Ovary (tissue), 10 donors: ENCODE measurements at regions of chr11 and their contacts with region 1.

Region 1: DNA sequence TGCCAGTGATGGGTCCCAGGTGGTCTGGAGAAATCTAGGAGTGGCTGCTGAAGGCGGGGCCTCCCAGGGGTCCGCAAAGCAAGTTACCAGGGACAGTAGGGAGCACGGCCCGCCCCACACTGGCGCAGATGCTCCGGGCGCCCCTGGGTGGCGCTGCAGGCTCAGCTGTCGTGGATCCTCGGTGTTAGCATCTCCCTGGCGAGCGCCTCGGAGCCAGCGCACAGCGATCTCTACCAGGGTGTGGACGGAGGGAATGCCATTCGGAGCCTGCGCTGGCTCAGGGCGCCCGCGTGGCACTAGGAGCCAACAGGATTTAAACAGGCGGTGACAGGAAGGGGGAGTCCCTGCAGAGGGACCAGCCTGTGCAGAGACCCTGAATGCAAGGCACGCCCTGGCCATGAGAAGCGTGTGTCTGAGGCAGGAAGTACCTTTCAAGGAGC is 20.2 kb downstream of the FADS3 start:
- DNase-seq: peak; percentile 69 to 86 (median 79)
- H3K4me3 ChIP-seq: no peak overlapping the region
- H3K27ac ChIP-seq: peak overlapping the region in 1 of 2 donors; percentile 19
- H3K4me1 ChIP-seq: peaks cover 4% of the 10 kb centered on the region
- H3K27me3 ChIP-seq: no peaks in the 10 kb centered on the region
- CTCF ChIP-seq: peak; percentile 59 to 90 (median 89)
- EP300 ChIP-seq: no peak
- POLR2A ChIP-seq: no peak

Region 2: GRCh38 chr11:61803889-61804647 is 67.1 kb before region 1 on chr11:
- intact Hi-C with region 1: loop called in 1 of 4 experiments (anchors 10 kb)
- DNase-seq: no peak
- H3K4me3 ChIP-seq: no peak overlapping the region
- H3K27ac ChIP-seq: no peak overlapping the region
- H3K4me1 ChIP-seq: no peaks in the 10 kb centered on the region
- H3K27me3 ChIP-seq: no peaks in the 10 kb centered on the region
- CTCF ChIP-seq: no peak
- EP300 ChIP-seq: no peak
- POLR2A ChIP-seq: no peak

Region 3: GRCh38 chr11:62069986-62070919 is 199.1 kb after region 1 on chr11:
- intact Hi-C with region 1: loop called in 1 of 4 experiments (anchors 10 kb)
- DNase-seq: no peak
- H3K4me3 ChIP-seq: no peak overlapping the region
- H3K27ac ChIP-seq: no peak overlapping the region
- H3K4me1 ChIP-seq: no peaks in the 10 kb centered on the region
- H3K27me3 ChIP-seq: no peaks in the 10 kb centered on the region
- CTCF ChIP-seq: no peak
- EP300 ChIP-seq: no peak
- POLR2A ChIP-seq: no peak

Region 4: GRCh38 chr11:62186195-62186594 is 315.0 kb after region 1 on chr11:
- intact Hi-C with region 1: no loop called
- DNase-seq: no peak
- H3K4me3 ChIP-seq: no peak overlapping the region
- H3K27ac ChIP-seq: no peak overlapping the region
- H3K4me1 ChIP-seq: no peaks in the 10 kb centered on the region
- H3K27me3 ChIP-seq: no peaks in the 10 kb centered on the region
- CTCF ChIP-seq: no peak
- EP300 ChIP-seq: no peak
- POLR2A ChIP-seq: no peak

Region 5: GRCh38 chr11:62309991-62310390 is 438.8 kb after region 1 on chr11:
- intact Hi-C with region 1: loop called in 1 of 4 experiments (anchors 5 kb)
- DNase-seq: no peak
- H3K4me3 ChIP-seq: no peak overlapping the region
- H3K27ac ChIP-seq: no peak overlapping the region
- H3K4me1 ChIP-seq: no peaks in the 10 kb centered on the region
- H3K27me3 ChIP-seq: no peaks in the 10 kb centered on the region
- CTCF ChIP-seq: no peak
- EP300 ChIP-seq: no peak
- POLR2A ChIP-seq: no peak